ENCODE measurements at regions of chr2 and their contacts with region 1.

Region 1: DNA sequence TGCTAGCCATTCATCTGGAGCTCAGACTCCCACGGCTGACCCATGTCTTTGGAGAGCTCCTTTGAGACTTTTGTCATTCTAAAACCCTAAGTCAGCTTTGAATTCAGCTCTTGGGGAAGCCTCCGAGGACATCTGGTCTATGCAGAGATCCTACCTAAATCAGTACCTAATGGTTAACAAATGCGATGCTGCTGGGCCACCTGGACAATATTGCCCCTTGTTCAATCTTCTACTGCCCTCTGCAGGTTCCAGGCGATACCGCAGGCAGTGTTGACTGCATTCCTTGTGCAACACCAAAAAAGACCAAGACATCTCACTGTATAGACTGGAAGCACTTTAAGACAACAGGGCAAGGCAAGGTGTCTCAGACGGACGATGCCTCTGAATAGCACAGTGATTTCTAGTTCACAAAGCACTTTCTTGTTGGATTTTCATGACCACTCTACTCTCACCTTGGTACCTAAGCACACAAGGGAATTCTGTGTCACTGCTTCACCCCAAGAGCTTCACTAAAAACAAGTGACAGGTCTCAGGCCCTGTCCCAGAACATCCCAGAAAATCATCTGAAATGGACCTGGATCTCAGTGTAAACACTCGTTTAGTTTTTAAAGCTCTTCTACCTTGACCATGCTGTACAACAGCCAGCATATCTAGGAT is 80.9 kb downstream of the XDH start:
- DNase-seq: peak; percentile 24
- H3K4me3 ChIP-seq: no peak overlapping the region
- H3K27me3 ChIP-seq: no peaks in the 10 kb centered on the region
- CTCF ChIP-seq: peak; percentile 96

Region 2: GRCh38 chr2:31170071-31170698 is 163.5 kb before region 1 on chr2:
- CTCF ChIA-PET with region 1: interaction called, 28 read pairs
- POLR2A ChIA-PET with region 1: no interaction called
- DNase-seq: peak; percentile 4
- H3K4me3 ChIP-seq: no peak overlapping the region
- H3K27me3 ChIP-seq: 0 out of 2 replicates have a peak, but pooled peaks cover 2% of the 10 kb centered on the region
- CTCF ChIP-seq: peak; percentile 93

Region 3: DNA sequence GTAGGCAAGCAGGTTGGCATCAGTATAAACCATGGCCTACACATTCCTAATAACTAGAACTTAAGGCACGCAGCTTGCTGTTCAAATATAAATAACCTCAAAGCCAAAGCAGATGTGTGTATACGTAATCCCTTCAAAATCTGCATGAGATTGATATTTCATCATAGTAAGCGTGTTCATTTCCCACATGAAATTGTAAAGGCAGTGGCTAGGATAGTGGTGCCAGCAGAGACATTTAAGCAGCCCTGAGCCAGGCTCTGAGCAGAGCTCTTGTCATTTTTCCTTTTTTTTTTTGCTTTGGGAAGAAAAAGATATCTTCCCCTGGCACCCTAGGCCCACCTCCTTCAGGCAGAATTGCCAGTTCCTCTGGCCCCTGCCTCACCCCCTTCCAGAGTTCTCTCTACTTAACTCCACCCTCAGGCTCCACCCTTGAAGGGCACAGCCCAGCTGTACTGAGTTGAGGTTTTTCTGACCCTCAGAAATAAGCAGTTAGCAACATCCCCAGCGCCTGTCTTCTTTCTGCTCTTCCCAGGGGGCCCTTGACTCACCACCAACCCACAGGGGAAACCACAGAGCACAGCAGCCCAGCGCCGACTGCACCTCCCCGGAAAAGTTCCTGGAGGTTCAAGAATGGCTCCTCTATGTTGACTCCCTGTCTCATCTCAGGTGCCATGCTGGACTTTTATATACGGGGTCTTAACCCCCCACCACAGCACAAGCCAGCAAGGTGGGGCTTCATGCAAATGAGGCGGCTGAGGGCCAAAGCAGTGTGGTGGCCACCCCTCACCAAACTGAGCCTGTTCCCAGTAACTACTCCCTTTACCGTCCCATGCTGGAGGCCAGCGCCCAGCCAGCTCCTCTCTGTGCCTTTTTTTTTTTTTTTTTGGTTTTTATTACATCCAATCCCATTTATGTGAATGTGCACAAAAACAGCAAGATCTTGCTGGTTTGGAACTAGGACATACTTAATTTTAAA is 15.0 kb before region 1 on chr2:
- CTCF ChIA-PET with region 1: interaction called, 50 read pairs
- POLR2A ChIA-PET with region 1: no interaction called
- DNase-seq: no peak
- H3K4me3 ChIP-seq: no peak overlapping the region
- H3K27me3 ChIP-seq: no peaks in the 10 kb centered on the region
- CTCF ChIP-seq: no peak

Region 4: DNA sequence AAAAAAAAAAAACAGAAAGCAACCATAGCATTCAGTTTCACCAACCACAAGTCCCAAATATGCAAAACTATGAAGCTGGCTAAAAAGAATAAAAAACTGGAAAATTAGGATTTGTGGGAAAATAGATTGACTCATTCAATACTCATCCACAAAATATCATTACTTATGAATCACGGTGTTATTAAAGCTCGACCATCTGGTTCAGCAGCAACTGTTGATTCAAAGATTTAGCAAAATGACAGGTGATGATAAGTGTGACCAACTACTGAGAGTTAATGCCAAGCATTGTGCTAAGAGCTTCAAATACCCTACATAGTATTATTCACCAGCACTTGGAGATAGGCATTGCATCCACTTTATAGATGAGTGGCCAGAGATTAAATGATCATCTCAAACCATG is 107.1 kb after region 1 on chr2:
- CTCF ChIA-PET with region 1: interaction called, 14 read pairs
- POLR2A ChIA-PET with region 1: interaction called, 5 read pairs
- DNase-seq: peak; percentile 85
- H3K4me3 ChIP-seq: no peak overlapping the region
- H3K27me3 ChIP-seq: no peaks in the 10 kb centered on the region
- CTCF ChIP-seq: no peak

Measured in BJ (cell line).